ENCODE measurements at regions of chr9 and their contacts with region 1.

Region 1: DNA sequence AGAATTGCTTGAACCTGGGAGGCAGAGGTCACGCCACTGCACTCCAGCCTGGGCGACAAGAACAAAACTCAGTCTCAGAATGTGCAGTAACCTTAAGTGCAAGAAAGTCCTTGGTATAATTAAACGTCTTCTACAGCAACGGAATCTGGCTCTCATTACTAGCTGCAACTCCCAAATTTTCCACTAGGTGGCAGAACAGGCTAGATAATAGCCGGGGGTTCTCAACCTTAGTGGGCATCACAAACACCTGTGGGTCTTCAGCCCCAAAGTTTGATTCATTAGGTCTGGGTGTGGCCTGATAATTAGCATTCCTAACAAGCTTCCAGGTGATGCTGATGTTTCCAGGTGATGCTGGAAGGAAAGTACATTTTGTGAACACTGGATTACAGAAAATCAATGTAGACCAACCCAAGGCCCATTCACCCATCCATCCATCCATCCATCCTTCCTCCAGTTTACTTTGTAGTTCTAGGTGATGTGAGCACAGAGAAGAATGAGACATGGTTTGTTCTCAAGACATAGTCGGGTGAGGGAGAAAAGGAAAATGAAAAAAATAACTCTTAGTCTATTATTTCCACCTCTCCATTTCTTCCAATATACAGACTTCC is 37.3 kb downstream of the FBXW2 start:
- DNase-seq: peak; percentile 74
- ATAC-seq: peak; percentile 73
- H3K4me3 Mint-ChIP-seq: no peak overlapping the region
- H3K27ac Mint-ChIP-seq: peak overlapping the region; percentile 68
- H3K4me1 Mint-ChIP-seq: peaks cover 27% of the 10 kb centered on the region
- H3K27me3 Mint-ChIP-seq: no peaks in the 10 kb centered on the region

Region 2: DNA sequence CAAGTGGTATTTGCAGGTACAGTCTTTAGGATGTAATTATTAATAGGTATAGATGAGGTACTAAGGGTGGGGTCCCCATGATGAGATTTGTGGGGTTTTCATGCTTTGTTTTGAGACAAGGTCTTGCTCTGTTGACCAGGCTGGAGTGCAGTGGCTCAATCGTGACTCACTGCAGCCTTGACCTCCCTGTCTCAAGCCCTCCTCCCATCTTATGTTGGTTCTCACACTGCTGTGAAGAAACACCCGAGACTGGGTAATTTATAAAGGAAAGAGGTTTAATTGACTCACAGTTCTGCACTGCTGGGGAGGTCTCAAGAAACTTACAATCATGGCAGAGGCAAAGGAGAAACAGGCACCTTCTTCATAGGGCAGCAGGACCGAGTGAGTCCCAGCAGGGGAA is 393.5 kb before region 1 on chr9:
- CTCF ChIA-PET with region 1: no interaction called
- POLR2A ChIA-PET with region 1: no interaction called
- intact Hi-C with region 1: no loop called
- DNase-seq: no peak
- ATAC-seq: no peak
- H3K4me3 Mint-ChIP-seq: no peak overlapping the region
- H3K27ac Mint-ChIP-seq: no peak overlapping the region
- H3K4me1 Mint-ChIP-seq: no peaks in the 10 kb centered on the region
- H3K27me3 Mint-ChIP-seq: no peaks in the 10 kb centered on the region

Region 3: DNA sequence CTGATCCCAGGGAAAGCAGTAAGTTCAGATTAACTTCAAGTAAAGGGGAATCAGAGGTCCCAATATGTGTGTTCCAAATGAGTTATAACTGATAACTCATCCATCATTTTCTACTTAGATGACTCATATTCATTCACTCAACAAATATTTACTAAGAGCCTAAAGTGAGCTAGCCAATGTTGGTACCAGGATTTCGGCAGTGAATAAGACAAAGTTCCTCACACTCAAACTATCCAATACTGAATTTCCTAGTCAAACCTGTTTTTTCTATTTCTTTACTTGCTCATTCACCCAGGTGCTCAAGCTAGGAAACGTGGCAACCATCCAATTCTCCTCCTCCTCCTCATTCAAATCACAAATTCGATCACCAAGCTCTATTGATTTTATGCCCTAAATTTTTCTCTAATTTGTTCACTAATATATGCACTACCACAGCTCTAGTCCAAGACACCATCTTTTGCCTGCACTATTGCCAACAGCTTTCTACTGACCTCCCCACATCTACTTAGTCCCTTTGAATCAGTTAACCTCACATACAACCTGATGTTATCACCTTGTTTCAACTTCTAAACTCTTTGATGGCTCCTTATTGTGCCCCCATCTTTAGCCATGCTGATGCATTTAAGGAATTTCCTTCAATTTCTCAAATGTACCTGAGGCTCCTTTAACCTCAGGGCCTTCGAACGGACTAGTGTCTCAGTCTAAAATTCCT is 11.7 kb after region 1 on chr9:
- CTCF ChIA-PET with region 1: interaction called, 31 read pairs
- POLR2A ChIA-PET with region 1: no interaction called
- intact Hi-C with region 1: no loop called
- DNase-seq: no peak
- ATAC-seq: peak; percentile 39
- H3K4me3 Mint-ChIP-seq: no peak overlapping the region
- H3K27ac Mint-ChIP-seq: peak overlapping the region; percentile 7
- H3K4me1 Mint-ChIP-seq: peaks cover 9% of the 10 kb centered on the region
- H3K27me3 Mint-ChIP-seq: no peaks in the 10 kb centered on the region

Region 4: DNA sequence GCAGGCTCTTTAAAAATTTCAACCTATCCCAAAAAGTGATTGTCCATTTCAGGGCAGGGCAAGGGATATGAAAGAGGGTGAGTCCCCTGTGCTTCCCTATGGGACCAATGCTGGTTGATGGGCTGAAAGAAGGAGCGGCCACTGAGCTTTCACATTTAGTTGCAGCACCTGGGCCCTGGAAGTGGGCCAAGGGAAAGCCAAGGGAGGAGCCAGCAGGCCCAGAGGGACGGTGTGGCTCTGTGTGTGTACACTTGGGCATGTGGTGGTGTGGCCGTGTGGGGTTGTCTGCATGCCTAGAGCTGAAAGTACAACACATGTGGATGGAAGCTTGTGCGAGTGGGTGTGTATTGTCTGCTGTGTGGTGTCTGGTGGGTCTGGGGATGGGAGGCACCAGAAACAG is 100.8 kb after region 1 on chr9:
- CTCF ChIA-PET with region 1: no interaction called
- POLR2A ChIA-PET with region 1: no interaction called
- intact Hi-C with region 1: no loop called
- DNase-seq: no peak
- ATAC-seq: peak; percentile 16
- H3K4me3 Mint-ChIP-seq: no peak overlapping the region
- H3K27ac Mint-ChIP-seq: peak overlapping the region; percentile 25
- H3K4me1 Mint-ChIP-seq: peaks cover 19% of the 10 kb centered on the region
- H3K27me3 Mint-ChIP-seq: no peaks in the 10 kb centered on the region

Region 5: GRCh38 chr9:120936011-120936763 is 180.3 kb after region 1 on chr9:
- CTCF ChIA-PET with region 1: interaction called, 29 read pairs
- POLR2A ChIA-PET with region 1: interaction called, 4 read pairs
- intact Hi-C with region 1: loop called (anchors 1 kb)
- DNase-seq: peak; percentile 95
- ATAC-seq: peak; percentile 73
- H3K4me3 Mint-ChIP-seq: peak overlapping the region; percentile 34
- H3K27ac Mint-ChIP-seq: peak overlapping the region; percentile 93
- H3K4me1 Mint-ChIP-seq: peaks cover 62% of the 10 kb centered on the region
- H3K27me3 Mint-ChIP-seq: no peaks in the 10 kb centered on the region

Region 6: DNA sequence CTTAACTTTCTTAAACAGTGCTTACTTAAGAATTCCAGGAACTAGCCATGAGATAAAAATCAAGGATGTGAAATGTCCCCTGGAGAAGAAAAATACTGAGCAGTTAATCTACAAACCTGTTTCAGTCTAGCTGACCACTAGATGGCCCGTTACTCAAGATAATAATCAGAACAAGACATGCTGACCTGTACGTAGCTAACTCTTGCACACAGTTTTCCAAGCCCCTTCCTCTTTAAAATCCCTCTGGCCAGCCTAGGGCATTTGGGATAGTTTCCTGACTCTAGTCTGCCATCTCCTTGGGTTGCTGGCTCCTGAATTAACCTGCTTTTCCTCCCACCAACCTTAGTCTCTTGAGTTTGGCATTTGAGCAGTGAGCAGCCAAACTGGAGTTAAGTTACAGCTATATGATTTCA is 229.9 kb after region 1 on chr9:
- CTCF ChIA-PET with region 1: interaction called, 25 read pairs
- POLR2A ChIA-PET with region 1: no interaction called
- intact Hi-C with region 1: loop called (anchors 2 kb)
- DNase-seq: no peak
- ATAC-seq: no peak
- H3K4me3 Mint-ChIP-seq: no peak overlapping the region
- H3K27ac Mint-ChIP-seq: no peak overlapping the region
- H3K4me1 Mint-ChIP-seq: peaks cover 2% of the 10 kb centered on the region
- H3K27me3 Mint-ChIP-seq: no peaks in the 10 kb centered on the region

Region 7: DNA sequence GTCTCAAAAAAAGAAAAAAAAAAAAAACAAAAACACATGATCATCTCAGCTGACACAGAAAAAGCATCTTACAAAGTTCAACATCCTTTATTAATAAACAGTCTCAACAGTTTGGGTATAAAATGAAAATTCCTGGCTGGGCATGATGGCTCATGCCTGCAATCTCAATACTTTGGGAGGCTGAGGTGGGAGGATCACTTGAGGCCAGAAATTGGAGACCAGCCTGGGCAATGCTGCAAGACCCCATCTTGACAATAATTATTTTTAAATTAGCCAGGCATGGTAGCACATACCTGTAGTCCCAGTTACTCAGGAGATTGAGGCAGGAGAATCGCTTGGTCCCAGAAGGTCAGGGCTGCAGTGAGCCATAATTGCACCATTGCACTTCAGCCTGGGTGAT is 310.9 kb after region 1 on chr9:
- CTCF ChIA-PET with region 1: interaction called, 53 read pairs
- POLR2A ChIA-PET with region 1: no interaction called
- intact Hi-C with region 1: no loop called
- DNase-seq: no peak
- ATAC-seq: no peak
- H3K4me3 Mint-ChIP-seq: no peak overlapping the region
- H3K27ac Mint-ChIP-seq: no peak overlapping the region
- H3K4me1 Mint-ChIP-seq: peaks cover 40% of the 10 kb centered on the region
- H3K27me3 Mint-ChIP-seq: no peaks in the 10 kb centered on the region

Region 8: GRCh38 chr9:121399883-121400607 is 644.1 kb after region 1 on chr9:
- CTCF ChIA-PET with region 1: interaction called, 3 read pairs
- POLR2A ChIA-PET with region 1: no interaction called
- intact Hi-C with region 1: loop called in 1 of 2 experiments (anchors 5 kb)
- DNase-seq: no peak
- ATAC-seq: peak; percentile 75
- H3K4me3 Mint-ChIP-seq: no peak overlapping the region
- H3K27ac Mint-ChIP-seq: no peak overlapping the region
- H3K4me1 Mint-ChIP-seq: no peaks in the 10 kb centered on the region
- H3K27me3 Mint-ChIP-seq: no peaks in the 10 kb centered on the region

Measured in activated CD4-positive, alpha-beta T cell treated with anti-CD3 and anti-CD28 coated beads for 36 hours (primary cell).